ENCODE measurements at regions of chr3 and their contacts with region 1.

Region 1: DNA sequence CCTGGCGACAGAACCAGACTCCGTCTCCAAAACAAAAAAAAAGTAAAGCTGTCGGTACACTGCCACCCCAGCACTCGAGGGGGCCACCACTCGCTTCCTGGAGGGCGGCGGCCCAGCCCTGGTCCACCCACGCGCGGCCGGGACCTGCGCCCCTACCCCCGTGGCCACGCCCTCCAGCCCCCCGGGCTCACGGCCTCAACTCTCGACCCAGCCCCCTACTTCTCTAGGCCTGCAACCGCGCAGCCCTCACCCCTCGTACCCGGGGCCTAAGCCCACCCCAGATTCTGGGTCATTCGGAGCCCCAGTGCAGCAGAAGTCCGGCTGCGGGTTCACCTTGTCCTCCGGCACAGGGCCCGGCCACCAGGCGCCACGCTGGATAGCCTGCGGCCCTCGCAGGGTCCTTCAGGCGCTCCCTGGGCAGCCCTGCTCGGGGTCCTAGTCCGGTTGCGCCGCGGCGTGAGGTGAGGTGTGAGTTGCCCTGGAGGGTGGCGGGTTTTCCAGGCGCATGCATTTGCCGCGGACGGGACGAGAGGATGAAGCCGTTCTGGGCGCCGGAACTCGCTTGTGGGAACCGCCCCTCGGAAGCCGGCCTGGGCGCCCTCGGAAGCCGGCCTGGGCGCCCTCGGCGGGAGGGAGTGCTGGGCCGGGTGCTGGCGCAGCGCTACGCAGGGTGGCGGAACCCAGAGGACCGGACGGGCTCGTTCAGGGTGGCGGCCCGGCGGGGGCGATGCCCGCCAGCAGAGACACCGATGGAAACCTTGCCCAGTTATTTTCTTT is 32.3 kb downstream of the SPINK8 start:
- DNase-seq: peak; percentile 94
- H3K4me3 Mint-ChIP-seq: peak within 1 kb of the TSS; percentile 94
- H3K27ac Mint-ChIP-seq: peak within 1 kb of the TSS; percentile 96
- H3K4me1 Mint-ChIP-seq: peaks cover 28% of the 10 kb centered on the region
- H3K27me3 Mint-ChIP-seq: no peaks in the 10 kb centered on the region

Region 2: DNA sequence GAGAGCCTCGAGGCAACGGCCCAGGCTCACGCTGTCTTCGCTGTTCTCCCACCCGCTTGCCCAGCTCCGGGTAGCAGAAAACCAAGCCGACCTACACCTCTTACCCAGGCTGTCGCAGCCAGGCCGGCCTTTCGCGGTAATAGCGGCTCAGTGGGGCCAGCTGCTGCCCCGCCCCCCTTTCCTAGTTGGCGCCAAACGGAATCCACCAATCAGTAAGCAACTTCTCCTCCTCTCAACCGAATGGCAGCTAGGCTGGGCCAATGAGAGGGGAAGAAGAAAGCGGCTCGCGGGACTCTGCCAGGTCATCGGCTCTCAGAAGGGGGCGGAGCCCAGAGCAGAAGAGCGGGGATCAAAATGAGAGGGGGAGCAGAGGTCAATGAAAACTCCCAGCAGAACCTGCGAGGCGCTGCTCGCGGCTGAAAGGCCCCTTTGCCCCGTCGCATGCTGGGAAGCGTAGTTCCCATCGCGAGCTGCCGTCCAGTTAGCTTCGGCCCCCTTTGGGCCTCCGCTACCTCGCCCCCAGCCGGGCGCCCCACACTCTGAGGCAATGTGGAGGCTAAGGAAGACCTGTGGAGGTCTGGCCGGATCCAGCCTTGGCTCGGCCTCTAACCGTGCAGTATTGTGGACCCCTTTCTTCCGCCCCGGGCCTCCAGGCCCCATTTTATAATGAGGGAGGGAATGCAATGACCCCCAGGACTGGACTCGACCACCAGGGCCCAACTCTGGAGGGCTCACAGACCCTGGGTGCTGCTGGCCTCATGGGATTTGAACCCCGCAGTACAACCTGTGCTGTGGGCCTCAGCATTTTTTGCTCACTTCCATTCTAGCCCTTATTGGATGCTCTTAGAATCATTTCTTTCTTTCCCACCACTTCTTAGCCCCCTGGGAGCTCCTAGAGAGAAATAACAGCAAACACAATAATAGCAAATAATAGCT is 112.7 kb before region 1 on chr3 and contains the start of gene CDC25A:
- CTCF ChIA-PET with region 1: no interaction called
- intact Hi-C with region 1: loop called (anchors 1 kb)
- DNase-seq: peak; percentile 98
- H3K4me3 Mint-ChIP-seq: peak within 1 kb of the TSS; percentile 88
- H3K27ac Mint-ChIP-seq: peak within 1 kb of the TSS; percentile 61
- H3K4me1 Mint-ChIP-seq: peaks cover 17% of the 10 kb centered on the region
- H3K27me3 Mint-ChIP-seq: peaks cover 11% of the 10 kb centered on the region
- total RNA-seq, gene CDC25A: 40.8 to 41.8 TPM

Region 3: GRCh38 chr3:48347500-48347899 is 46.3 kb after region 1 on chr3:
- CTCF ChIA-PET with region 1: no interaction called
- intact Hi-C with region 1: no loop called
- DNase-seq: no peak
- H3K4me3 Mint-ChIP-seq: no peak overlapping the region
- H3K27ac Mint-ChIP-seq: no peak overlapping the region
- H3K4me1 Mint-ChIP-seq: no peaks in the 10 kb centered on the region
- H3K27me3 Mint-ChIP-seq: no peaks in the 10 kb centered on the region

Region 4: GRCh38 chr3:48408823-48409281 is 107.6 kb after region 1 on chr3:
- CTCF ChIA-PET with region 1: no interaction called
- intact Hi-C with region 1: no loop called
- DNase-seq: peak; percentile 16
- H3K4me3 Mint-ChIP-seq: no peak overlapping the region
- H3K27ac Mint-ChIP-seq: no peak overlapping the region
- H3K4me1 Mint-ChIP-seq: no peaks in the 10 kb centered on the region
- H3K27me3 Mint-ChIP-seq: no peaks in the 10 kb centered on the region

Measured in activated naive CD4-positive, alpha-beta T cell treated with anti-CD3 and anti-CD28 coated beads for 36 hours (primary cell).